MCF 10A (cell line): ENCODE measurements at regions of chr1 and their contacts with region 1.

Region 1: GRCh38 chr1:224434691-224435317 is at the start of gene WDR26:
- DNase-seq: peak; percentile 96
- H3K4me3 Mint-ChIP-seq: peak within 1 kb of the TSS; percentile 80
- H3K27ac Mint-ChIP-seq: peak within 1 kb of the TSS; percentile 69
- H3K4me1 Mint-ChIP-seq: peaks cover 44% of the 10 kb centered on the region
- H3K27me3 Mint-ChIP-seq: no peaks in the 10 kb centered on the region
- CTCF ChIP-seq: peak; percentile 18
- total RNA-seq, gene WDR26: 149 and 156 TPM in 2 replicates

Region 2: GRCh38 chr1:224392411-224393249 is 42.2 kb before region 1 on chr1:
- CTCF ChIA-PET with region 1: interaction called, 5 read pairs
- POLR2A ChIA-PET with region 1: interaction called, 10 read pairs
- intact Hi-C with region 1: no loop called
- DNase-seq: no peak
- H3K4me3 Mint-ChIP-seq: no peak overlapping the region
- H3K27ac Mint-ChIP-seq: no peak overlapping the region
- H3K4me1 Mint-ChIP-seq: no peaks in the 10 kb centered on the region
- H3K27me3 Mint-ChIP-seq: no peaks in the 10 kb centered on the region
- CTCF ChIP-seq: no peak

Region 3: DNA sequence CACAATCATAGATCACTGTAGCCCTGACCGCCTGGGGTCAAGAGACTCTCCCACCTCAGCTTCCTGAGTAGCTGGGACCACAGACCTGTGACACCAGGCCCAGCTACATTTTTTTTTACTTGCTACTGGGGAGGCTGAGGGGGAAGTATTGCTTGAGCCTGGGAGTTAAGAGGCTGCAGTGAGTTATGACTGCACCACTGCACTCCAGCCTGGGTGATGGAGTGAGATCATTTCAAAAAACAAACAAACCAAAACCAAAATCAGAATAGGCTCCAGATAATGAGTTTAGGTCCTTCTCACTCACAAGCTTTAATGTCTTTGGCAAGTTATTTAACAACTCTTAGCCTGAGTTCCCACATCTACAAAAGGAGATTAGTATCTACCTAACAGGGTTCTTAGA is 23.0 kb before region 1 on chr1:
- CTCF ChIA-PET with region 1: interaction called, 4 read pairs
- POLR2A ChIA-PET with region 1: interaction called, 84 read pairs
- intact Hi-C with region 1: no loop called
- DNase-seq: no peak
- H3K4me3 Mint-ChIP-seq: no peak overlapping the region
- H3K27ac Mint-ChIP-seq: peak overlapping the region; percentile 47
- H3K4me1 Mint-ChIP-seq: peaks cover 11% of the 10 kb centered on the region
- H3K27me3 Mint-ChIP-seq: no peaks in the 10 kb centered on the region
- CTCF ChIP-seq: no peak

Region 4: DNA sequence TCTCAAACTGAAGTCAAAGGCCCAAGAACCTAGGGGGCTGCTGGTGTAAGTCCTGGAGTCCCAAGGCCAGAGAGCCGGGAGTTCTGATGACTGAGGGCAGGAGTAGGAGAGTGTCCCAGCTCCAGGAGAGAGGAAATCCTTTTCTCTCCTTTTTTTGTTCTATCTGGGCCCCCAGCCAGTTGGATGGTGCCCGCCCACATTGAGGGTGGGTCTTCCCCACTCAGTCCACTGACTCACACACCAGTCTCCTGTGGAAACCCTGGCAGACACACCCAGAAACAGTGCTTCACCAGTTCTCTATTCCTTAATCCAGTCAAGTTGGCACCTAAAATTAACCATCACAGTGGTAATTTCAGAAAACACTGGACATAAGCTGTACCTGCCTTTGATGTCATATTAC is 12.4 kb after region 1 on chr1:
- CTCF ChIA-PET with region 1: interaction called, 418 read pairs
- POLR2A ChIA-PET with region 1: interaction called, 800 read pairs
- intact Hi-C with region 1: no loop called
- DNase-seq: peak; percentile 82
- H3K4me3 Mint-ChIP-seq: no peak overlapping the region
- H3K27ac Mint-ChIP-seq: peak overlapping the region; percentile 21
- H3K4me1 Mint-ChIP-seq: peaks cover 34% of the 10 kb centered on the region
- H3K27me3 Mint-ChIP-seq: no peaks in the 10 kb centered on the region
- CTCF ChIP-seq: no peak

Region 5: GRCh38 chr1:224497714-224498573 is 63.1 kb after region 1 on chr1:
- CTCF ChIA-PET with region 1: interaction called, 16 read pairs
- POLR2A ChIA-PET with region 1: interaction called, 294 read pairs
- intact Hi-C with region 1: loop called (anchors 2 kb)
- DNase-seq: peak; percentile 97
- H3K4me3 Mint-ChIP-seq: peak overlapping the region; percentile 50
- H3K27ac Mint-ChIP-seq: peak overlapping the region; percentile 86
- H3K4me1 Mint-ChIP-seq: peaks cover 69% of the 10 kb centered on the region
- H3K27me3 Mint-ChIP-seq: no peaks in the 10 kb centered on the region
- CTCF ChIP-seq: peak; percentile 6

Region 6: GRCh38 chr1:224565186-224565585 is 130.4 kb after region 1 on chr1:
- CTCF ChIA-PET with region 1: no interaction called
- POLR2A ChIA-PET with region 1: no interaction called
- intact Hi-C with region 1: loop called (anchors 5 kb)
- DNase-seq: peak; percentile 100
- H3K4me3 Mint-ChIP-seq: peak overlapping the region; percentile 7
- H3K27ac Mint-ChIP-seq: peak overlapping the region; percentile 53
- H3K4me1 Mint-ChIP-seq: peaks cover 30% of the 10 kb centered on the region
- H3K27me3 Mint-ChIP-seq: no peaks in the 10 kb centered on the region
- CTCF ChIP-seq: no peak

Region 7: DNA sequence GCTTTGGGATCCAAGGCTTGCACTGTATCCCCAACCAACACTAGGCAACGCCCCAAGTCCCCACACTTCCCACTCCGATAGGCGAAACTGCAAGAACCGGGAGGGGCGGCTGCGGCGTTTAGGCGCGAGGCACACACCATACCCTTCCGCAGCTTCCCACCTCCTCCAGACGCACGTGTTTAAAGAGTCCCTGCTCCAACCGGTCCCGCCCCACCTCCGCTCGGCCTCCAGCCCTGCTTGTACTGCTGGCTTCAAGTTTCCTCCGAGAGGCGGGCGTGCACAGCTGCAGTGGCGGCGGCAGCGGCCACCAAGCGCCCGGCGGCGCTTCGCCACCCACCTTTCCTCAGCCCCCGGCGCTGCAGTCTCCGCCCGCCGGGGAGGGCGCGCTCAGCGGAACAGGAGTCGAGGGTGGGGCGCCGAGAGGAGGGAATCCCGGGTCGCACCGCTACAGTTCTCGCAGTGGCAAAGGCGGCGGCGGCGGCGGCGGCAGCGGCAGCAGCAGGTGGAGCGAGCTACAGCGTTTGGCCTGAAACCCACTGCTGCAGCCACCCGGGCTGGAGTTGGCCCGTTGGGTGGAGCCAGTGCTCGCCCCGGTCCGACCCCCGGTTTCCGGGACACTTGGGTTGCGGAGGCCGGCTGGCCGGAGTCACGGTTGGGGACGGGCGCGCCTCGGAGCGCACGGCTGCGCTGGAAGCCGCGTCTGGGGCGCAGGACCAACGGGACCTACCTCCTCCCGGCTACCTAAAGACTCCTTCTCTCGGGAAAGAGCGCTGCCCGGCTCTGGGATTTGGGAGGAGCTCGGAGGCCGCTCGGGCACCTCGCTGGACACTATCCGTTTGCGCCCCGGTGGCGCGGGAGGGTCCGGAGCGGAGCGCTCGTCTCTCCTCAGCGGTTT is 181.3 kb after region 1 on chr1 and contains the start of gene CNIH3:
- CTCF ChIA-PET with region 1: no interaction called
- POLR2A ChIA-PET with region 1: no interaction called
- intact Hi-C with region 1: no loop called
- DNase-seq: peak; percentile 33
- H3K4me3 Mint-ChIP-seq: peak within 1 kb of the TSS; percentile 41
- H3K27ac Mint-ChIP-seq: no peak within 1 kb of the TSS
- H3K4me1 Mint-ChIP-seq: no peaks in the 10 kb centered on the region
- H3K27me3 Mint-ChIP-seq: peaks cover 45% of the 10 kb centered on the region
- CTCF ChIP-seq: no peak
- total RNA-seq, gene CNIH3: 3.4 and 3.6 TPM in 2 replicates